HepG2 (cell line): ENCODE measurements at regions of chr1 and their contacts with region 1.

Region 1: DNA sequence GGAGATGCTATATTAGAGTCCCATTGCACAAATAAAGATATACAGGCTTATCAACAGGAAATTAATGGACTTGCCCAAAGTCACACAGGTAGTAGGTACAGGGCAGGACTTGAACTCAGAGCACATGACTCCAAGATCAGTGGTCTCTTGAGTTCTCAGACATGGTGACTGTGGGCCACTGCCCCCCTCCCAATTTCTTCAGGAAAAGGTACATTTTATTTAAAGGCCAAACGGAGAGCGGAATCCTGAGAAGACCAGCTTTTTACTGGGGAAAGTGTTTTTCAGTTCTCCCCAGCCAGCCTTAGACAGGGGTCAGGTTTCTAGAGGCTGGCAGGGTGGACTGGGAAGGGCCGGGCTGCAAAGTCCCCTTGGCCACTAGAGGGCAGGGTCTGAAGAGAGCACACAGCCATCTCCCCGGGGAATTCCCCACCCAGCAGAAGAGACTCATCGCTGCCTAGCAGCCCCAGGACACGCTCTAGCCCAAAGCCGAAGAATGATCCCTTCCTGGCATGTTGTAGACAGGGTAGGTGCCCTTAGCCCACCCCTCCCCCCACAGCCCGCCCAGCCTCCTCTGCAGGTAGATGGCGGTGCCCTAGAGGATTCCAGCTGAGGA is 29.7 kb downstream of the ACP6 start:
- DNase-seq: peak; percentile 65
- ATAC-seq: peak; percentile 96
- H3K4me3 ChIP-seq: no peak overlapping the region
- H3K27ac ChIP-seq: no peak overlapping the region
- H3K4me1 ChIP-seq: peaks cover 40% of the 10 kb centered on the region
- H3K27me3 ChIP-seq: no peaks in the 10 kb centered on the region
- CTCF ChIP-seq: peak; percentile 87
- EP300 ChIP-seq: no peak
- POLR2A ChIP-seq: no peak
- RAD21 ChIP-seq: peak; percentile 63; the same call in 1 of the 2 replicates

Region 2: GRCh38 chr1:147494998-147495580 is 145.6 kb before region 1 on chr1:
- CTCF ChIA-PET with region 1: interaction called, 28 read pairs
- POLR2A ChIA-PET with region 1: no interaction called
- in situ Hi-C with region 1: no loop called
- intact Hi-C with region 1: loop called (anchors 1 kb)
- DNase-seq: peak; percentile 55
- ATAC-seq: peak; percentile 97
- H3K4me3 ChIP-seq: no peak overlapping the region
- H3K27ac ChIP-seq: no peak overlapping the region
- H3K4me1 ChIP-seq: no peaks in the 10 kb centered on the region
- H3K27me3 ChIP-seq: no peaks in the 10 kb centered on the region
- CTCF ChIP-seq: peak; percentile 91
- EP300 ChIP-seq: no peak
- POLR2A ChIP-seq: no peak
- RAD21 ChIP-seq: peak; percentile 77

Region 3: GRCh38 chr1:147515046-147515869 is 125.4 kb before region 1 on chr1:
- CTCF ChIA-PET with region 1: interaction called, 4 read pairs
- POLR2A ChIA-PET with region 1: no interaction called
- in situ Hi-C with region 1: no loop called
- intact Hi-C with region 1: loop called (anchors 1 kb)
- DNase-seq: peak; percentile 87
- ATAC-seq: peak; percentile 98
- H3K4me3 ChIP-seq: no peak overlapping the region
- H3K27ac ChIP-seq: no peak overlapping the region
- H3K4me1 ChIP-seq: peaks cover 16% of the 10 kb centered on the region
- H3K27me3 ChIP-seq: peaks cover 0 to 2% of the 10 kb centered on the region in 2 experiments; a peak in 1 of 5 replicates
- CTCF ChIP-seq: peak; percentile 78
- EP300 ChIP-seq: no peak
- POLR2A ChIP-seq: no peak
- RAD21 ChIP-seq: peak; percentile 58

Region 4: GRCh38 chr1:147700042-147701006 is 59.7 kb after region 1 on chr1:
- CTCF ChIA-PET with region 1: interaction called, 6 read pairs
- POLR2A ChIA-PET with region 1: no interaction called
- in situ Hi-C with region 1: no loop called
- intact Hi-C with region 1: loop called (anchors 2 kb)
- DNase-seq: peak; percentile 50
- ATAC-seq: peak; percentile 97
- H3K4me3 ChIP-seq: no peak overlapping the region; a peak in 1 of 6 replicates
- H3K27ac ChIP-seq: no peak overlapping the region
- H3K4me1 ChIP-seq: peaks cover 9% of the 10 kb centered on the region; the same call in 1 of the 2 replicates
- H3K27me3 ChIP-seq: peaks cover 0 to 12% of the 10 kb centered on the region in 2 experiments; a peak in 2 of 5 replicates
- CTCF ChIP-seq: peak; percentile 88
- EP300 ChIP-seq: no peak
- POLR2A ChIP-seq: no peak
- RAD21 ChIP-seq: peak; percentile 48; the same call in 1 of the 2 replicates

Region 5: GRCh38 chr1:147786536-147786935 is 145.9 kb after region 1 on chr1:
- CTCF ChIA-PET with region 1: no interaction called
- POLR2A ChIA-PET with region 1: no interaction called
- in situ Hi-C with region 1: no loop called
- intact Hi-C with region 1: no loop called
- DNase-seq: no peak
- ATAC-seq: no peak
- H3K4me3 ChIP-seq: no peak overlapping the region
- H3K27ac ChIP-seq: no peak overlapping the region
- H3K4me1 ChIP-seq: no peaks in the 10 kb centered on the region
- H3K27me3 ChIP-seq: no peaks in the 10 kb centered on the region
- CTCF ChIP-seq: no peak
- EP300 ChIP-seq: no peak
- POLR2A ChIP-seq: no peak
- RAD21 ChIP-seq: no peak

Region 6: GRCh38 chr1:147890177-147890790 is 249.6 kb after region 1 on chr1:
- CTCF ChIA-PET with region 1: interaction called, 12 read pairs
- POLR2A ChIA-PET with region 1: no interaction called
- in situ Hi-C with region 1: no loop called
- intact Hi-C with region 1: loop called (anchors 2 kb)
- DNase-seq: peak; percentile 30
- ATAC-seq: peak; percentile 99
- H3K4me3 ChIP-seq: no peak overlapping the region
- H3K27ac ChIP-seq: no peak overlapping the region
- H3K4me1 ChIP-seq: no peaks in the 10 kb centered on the region
- H3K27me3 ChIP-seq: no peaks in the 10 kb centered on the region
- CTCF ChIP-seq: peak; percentile 94
- EP300 ChIP-seq: no peak
- POLR2A ChIP-seq: no peak
- RAD21 ChIP-seq: peak; percentile 86